Posterior cingulate gyrus (tissue), 11 donors: ENCODE measurements at regions of chr6 and their contacts with region 1.

Region 1: DNA sequence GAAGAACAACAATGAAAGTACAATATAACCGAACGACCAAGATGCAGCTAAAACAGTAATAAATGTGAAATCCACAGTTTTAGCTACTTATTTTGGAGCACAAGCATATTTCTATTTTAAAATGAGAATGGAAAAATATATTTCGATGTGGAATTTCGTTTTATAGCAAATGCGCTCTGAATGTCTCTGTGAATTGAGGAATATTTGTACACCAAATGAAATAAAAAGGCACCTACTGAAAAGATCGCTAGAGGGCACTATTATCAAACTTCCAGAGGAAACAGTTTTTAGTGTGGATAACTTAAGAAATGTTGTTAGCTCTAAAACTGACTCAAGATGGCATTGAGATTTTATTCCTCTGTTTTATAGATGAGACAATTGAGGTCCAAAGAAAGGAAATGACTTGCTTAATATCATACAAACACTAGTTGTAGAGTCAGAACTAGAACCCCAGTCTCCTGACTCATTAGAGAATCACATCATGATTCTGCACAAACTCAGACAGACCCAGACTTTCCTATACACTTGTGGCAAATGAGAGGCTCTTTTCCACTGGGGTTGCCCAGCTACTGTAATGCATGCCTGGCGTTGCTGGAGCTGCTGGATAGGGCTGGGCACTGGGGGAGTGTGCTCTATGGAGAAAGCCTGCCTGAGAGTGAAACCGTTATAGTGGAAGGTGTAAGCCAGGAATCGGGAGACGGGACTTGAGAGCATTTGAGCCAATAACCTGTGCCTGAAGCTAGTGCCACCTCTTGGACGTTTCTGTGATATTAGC is 51.9 kb downstream of the GCLC start:
- DNase-seq: no peak

Region 2: DNA sequence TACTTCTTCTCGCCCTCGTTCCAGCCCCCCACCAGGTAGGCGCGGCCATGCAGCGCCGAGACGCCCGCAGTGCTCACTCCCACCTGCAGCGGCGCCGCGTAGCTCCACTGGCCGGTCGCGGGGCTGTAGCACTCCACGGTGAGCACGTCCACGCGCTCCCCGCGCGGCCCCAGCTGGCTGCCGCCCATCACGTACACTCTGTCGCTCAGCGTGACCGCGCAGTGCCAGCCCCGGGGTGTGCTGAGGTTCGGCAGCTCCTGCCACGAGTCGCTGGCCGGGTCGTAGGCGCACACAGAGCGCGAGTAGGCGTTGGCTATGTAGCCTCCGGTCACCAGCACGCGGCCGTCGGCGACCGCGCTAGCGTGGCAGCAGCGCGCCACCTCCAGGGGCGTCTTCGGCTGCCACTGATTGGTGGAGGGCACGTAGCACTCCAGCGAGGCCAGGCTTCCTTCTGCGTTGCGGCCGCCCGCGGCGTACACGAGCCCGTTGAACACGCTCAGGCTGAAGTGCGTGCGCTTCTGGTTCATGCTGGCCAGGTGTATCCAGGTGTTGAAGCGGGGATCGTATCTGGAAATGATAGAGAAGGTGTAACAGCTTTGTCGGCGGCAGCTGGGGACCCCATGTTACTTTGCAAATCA is 158.8 kb after region 1 on chr6:
- intact Hi-C with region 1: loop called (anchors 1 kb)
- DNase-seq: peak; percentile 49 to 96 (median 73)

Region 3: GRCh38 chr6:53725791-53726431 is 232.9 kb after region 1 on chr6:
- intact Hi-C with region 1: loop called (anchors 2 kb)
- DNase-seq: peak; percentile 67 to 97 (median 84)

Region 4: GRCh38 chr6:53741034-53741823 is 248.2 kb after region 1 on chr6:
- intact Hi-C with region 1: no loop called
- DNase-seq: no peak

Region 5: DNA sequence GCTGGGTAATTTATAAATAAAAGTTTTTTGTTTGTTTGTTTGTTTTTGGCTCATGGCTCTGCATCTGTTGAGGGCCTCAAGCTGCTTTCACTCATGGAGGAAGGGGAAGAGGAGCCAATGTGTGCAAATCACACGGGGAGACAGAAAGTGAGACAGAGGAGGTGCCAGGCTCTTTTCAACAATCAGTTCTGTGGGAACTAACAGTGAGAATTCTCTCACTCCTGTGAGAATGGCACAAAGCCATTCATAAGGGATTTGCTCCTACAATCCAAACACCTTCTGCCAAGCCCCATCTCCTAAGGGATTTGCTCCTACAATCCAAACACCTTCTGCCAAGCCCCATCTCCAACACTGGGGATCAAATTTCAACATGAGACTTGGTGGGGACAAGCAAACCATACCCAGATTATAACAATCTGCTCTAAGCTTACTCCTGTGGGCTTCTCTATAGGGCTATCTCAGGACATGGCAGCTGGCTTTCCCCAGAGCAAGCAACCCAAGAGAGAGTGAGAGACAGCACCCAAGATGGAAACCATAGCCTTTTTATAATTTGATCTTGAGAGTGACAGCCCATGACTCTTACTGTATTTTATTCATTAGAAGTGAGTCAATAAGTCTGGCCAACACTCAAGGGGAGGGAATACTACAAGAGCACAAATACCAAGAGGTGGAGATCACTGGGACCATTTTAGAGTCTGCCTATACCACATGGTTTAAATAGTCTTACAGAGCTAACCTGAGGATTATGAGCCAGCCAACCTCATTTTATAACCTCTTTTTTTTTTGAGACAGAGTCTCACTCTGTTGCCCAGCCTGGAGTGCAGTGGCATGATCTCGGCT is 279.0 kb after region 1 on chr6:
- intact Hi-C with region 1: no loop called
- DNase-seq: no peak